IMR-90 (cell line): ENCODE measurements at regions of chr12 and their contacts with region 1.

Region 1: DNA sequence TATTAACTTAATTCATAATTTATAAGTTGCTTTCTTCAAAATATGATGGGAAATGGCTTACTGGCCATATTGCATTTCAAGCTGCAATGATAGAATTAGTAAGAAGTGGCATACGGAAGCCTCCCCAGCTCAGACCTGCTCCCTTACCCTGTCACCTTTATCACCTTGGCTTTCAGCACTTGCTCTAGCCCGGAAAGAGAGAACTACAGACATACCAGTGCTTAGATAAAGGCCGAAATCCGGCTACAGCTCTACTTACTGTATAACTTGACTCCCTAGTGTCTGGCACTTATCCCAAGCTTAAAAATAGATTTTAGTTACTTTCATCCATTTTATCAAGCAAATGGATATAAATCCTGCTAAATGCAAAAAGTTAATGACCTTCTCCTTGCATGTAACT is 42.5 kb downstream of the PKP2 start:
- DNase-seq: no peak
- ATAC-seq: no peak
- H3K4me3 ChIP-seq: no peak overlapping the region
- H3K27ac ChIP-seq: no peak overlapping the region
- H3K4me1 ChIP-seq: no peaks in the 10 kb centered on the region
- H3K27me3 ChIP-seq: no peaks in the 10 kb centered on the region
- CTCF ChIP-seq: no peak
- POLR2A ChIP-seq: no peak
- RAD21 ChIP-seq: no peak

Region 2: GRCh38 chr12:32804301-32804700 is 49.8 kb before region 1 on chr12:
- CTCF ChIA-PET with region 1: interaction called, 11 read pairs
- POLR2A ChIA-PET with region 1: no interaction called
- dilution Hi-C with region 1: no loop called
- in situ Hi-C with region 1: no loop called
- intact Hi-C with region 1: no loop called
- DNase-seq: no peak
- ATAC-seq: no peak
- H3K4me3 ChIP-seq: no peak overlapping the region
- H3K27ac ChIP-seq: no peak overlapping the region
- H3K4me1 ChIP-seq: no peaks in the 10 kb centered on the region
- H3K27me3 ChIP-seq: no peaks in the 10 kb centered on the region
- CTCF ChIP-seq: no peak
- POLR2A ChIP-seq: no peak
- RAD21 ChIP-seq: no peak

Region 3: DNA sequence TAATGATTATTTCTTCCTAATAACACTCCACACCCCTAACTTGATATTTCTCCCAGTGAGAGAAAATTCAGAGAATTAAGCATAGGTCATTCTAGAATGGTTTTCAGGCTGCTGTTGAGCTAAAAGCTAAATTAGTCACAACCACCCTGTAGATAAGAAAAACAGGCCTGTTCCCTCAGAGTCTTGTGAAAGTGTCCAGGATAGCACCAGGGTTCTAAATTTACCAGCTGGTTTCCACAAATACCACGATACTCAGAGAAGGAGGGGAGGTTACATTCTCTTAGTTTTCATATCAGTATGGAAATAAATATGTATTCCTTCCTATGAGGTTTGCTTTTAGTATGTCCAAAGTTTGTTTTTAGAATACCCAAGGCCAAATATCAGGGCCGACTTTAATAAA is 32.4 kb before region 1 on chr12:
- CTCF ChIA-PET with region 1: no interaction called
- POLR2A ChIA-PET with region 1: no interaction called
- dilution Hi-C with region 1: no loop called
- in situ Hi-C with region 1: no loop called
- intact Hi-C with region 1: no loop called
- DNase-seq: no peak
- ATAC-seq: no peak
- H3K4me3 ChIP-seq: no peak overlapping the region
- H3K27ac ChIP-seq: no peak overlapping the region
- H3K4me1 ChIP-seq: no peaks in the 10 kb centered on the region
- H3K27me3 ChIP-seq: no peaks in the 10 kb centered on the region
- CTCF ChIP-seq: no peak
- POLR2A ChIP-seq: no peak
- RAD21 ChIP-seq: no peak

Region 4: DNA sequence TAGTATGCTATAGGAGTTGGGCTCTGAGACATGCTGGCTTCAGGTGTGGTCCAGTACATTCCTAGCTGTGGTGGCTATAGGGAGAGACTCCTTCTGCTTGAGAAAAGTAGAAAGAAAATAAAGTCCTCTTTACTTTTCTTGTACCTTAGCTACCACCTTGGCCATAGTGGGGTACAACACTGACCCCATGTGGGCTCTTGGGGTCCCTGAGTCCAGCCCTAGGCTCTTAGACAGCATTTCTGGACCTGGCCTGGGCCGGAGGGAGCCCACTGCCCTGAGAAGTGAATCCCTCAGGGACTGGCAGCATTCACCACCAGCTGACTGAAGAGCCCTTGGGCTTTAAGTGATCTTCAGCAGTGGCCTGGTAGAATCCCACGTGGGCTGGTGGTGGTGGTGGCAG is 442.4 kb after region 1 on chr12:
- CTCF ChIA-PET with region 1: no interaction called
- POLR2A ChIA-PET with region 1: no interaction called
- dilution Hi-C with region 1: no loop called
- in situ Hi-C with region 1: no loop called
- intact Hi-C with region 1: no loop called
- DNase-seq: no peak
- ATAC-seq: no peak
- H3K4me3 ChIP-seq: no peak overlapping the region
- H3K27ac ChIP-seq: no peak overlapping the region
- H3K4me1 ChIP-seq: no peaks in the 10 kb centered on the region
- H3K27me3 ChIP-seq: no peaks in the 10 kb centered on the region
- CTCF ChIP-seq: no peak
- POLR2A ChIP-seq: no peak
- RAD21 ChIP-seq: no peak